ENCODE measurements at regions of chr2 and their contacts with region 1.

Region 1: GRCh38 chr2:160332318-160332717 is 132.2 kb upstream of the ITGB6 start:
- DNase-seq: no peak
- ATAC-seq: peak; percentile 45
- H3K4me3 ChIP-seq: no peak overlapping the region
- H3K27ac ChIP-seq: no peak overlapping the region
- H3K4me1 ChIP-seq: peaks cover 5 to 14% of the 10 kb centered on the region in 2 donors
- H3K27me3 ChIP-seq: no peaks in the 10 kb centered on the region

Region 2: DNA sequence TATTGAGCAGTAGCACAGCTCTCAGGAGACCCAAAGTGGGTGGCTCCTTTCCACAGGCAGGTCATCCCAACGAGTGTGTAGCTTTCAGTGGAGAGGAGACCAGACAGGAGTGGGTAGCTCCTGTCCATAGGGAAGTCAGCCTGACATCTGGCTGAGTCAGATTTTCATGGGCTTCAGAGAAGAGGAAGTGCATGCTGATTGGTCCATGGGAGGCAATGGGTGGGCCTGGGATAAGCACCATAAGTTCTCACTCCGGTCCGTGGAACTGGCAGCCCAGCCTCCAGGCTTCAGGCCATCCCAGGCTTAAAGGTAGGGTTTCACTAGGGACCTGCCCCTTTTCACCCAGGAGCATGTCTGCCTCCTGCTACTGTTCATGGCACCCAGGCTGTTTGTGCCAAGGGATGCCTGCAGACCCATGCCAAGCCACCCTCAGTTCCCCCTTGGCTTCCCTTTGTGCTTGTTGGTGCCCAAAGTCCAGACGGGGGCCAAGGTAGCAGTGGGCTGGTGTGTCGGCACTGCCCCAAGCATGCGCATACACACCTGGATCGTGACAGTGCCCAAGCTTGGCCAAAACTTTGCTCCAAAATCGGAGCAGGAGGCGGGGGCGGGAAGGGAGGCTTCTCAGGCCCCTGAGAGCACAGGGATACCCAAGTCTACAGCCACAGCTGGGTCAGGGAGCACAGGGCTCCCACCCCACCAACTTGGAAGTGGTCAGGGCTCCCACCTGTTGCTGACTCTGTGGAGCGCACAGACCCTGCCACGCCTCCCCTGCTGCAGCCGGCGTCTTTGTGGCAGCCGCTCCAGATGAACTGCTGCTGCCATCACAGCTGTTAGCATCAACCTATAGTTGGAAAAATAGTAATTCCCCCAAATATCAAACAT is 593.6 kb before region 1 on chr2:
- intact Hi-C with region 1: no loop called
- DNase-seq: no peak
- ATAC-seq: peak; percentile 11
- H3K4me3 ChIP-seq: no peak overlapping the region
- H3K27ac ChIP-seq: no peak overlapping the region
- H3K4me1 ChIP-seq: no peaks in the 10 kb centered on the region
- H3K27me3 ChIP-seq: no peaks in the 10 kb centered on the region

Region 3: GRCh38 chr2:160406591-160407392 is 74.5 kb after region 1 on chr2:
- intact Hi-C with region 1: loop called in 1 of 2 experiments (anchors 5 kb)
- DNase-seq: peak; percentile 74 to 79
- ATAC-seq: peak; percentile 58
- H3K4me3 ChIP-seq: peak overlapping the region; percentile 98 to 99
- H3K27ac ChIP-seq: peak overlapping the region; percentile 80 to 96
- H3K4me1 ChIP-seq: peaks cover 4 to 7% of the 10 kb centered on the region in 2 donors
- H3K27me3 ChIP-seq: no peaks in the 10 kb centered on the region